Breast epithelium (tissue), 4 donors: ENCODE measurements at regions of chr10 and their contacts with region 1.

Region 1: GRCh38 chr10:5538450-5538849 is 13.7 kb downstream of the CALML3 start:
- DNase-seq: peak; percentile 51 to 64
- H3K4me3 ChIP-seq: no peak overlapping the region
- H3K27ac ChIP-seq: peak overlapping the region; percentile 78 to 81
- H3K4me1 ChIP-seq: peaks cover 0 to 14% of the 10 kb centered on the region in 2 donors
- H3K27me3 ChIP-seq: no peaks in the 10 kb centered on the region
- CTCF ChIP-seq: no peak
- POLR2A ChIP-seq: no peak

Region 2: GRCh38 chr10:5498791-5499492 is 39.5 kb before region 1 on chr10:
- intact Hi-C with region 1: loop called (anchors 1 kb)
- DNase-seq: peak in 1 of 2 donors; percentile 49
- H3K4me3 ChIP-seq: peak overlapping the region in 1 of 3 donors; percentile 24
- H3K27ac ChIP-seq: peak overlapping the region; percentile 52 to 70
- H3K4me1 ChIP-seq: peaks cover 0 to 15% of the 10 kb centered on the region in 2 donors
- H3K27me3 ChIP-seq: no peaks in the 10 kb centered on the region
- CTCF ChIP-seq: no peak
- POLR2A ChIP-seq: no peak